Activated B cell treated with CpG ODN at 0.5 μM for 24 hours (primary cell): ENCODE measurements at regions of chr2 and their contacts with region 1.

Region 1: DNA sequence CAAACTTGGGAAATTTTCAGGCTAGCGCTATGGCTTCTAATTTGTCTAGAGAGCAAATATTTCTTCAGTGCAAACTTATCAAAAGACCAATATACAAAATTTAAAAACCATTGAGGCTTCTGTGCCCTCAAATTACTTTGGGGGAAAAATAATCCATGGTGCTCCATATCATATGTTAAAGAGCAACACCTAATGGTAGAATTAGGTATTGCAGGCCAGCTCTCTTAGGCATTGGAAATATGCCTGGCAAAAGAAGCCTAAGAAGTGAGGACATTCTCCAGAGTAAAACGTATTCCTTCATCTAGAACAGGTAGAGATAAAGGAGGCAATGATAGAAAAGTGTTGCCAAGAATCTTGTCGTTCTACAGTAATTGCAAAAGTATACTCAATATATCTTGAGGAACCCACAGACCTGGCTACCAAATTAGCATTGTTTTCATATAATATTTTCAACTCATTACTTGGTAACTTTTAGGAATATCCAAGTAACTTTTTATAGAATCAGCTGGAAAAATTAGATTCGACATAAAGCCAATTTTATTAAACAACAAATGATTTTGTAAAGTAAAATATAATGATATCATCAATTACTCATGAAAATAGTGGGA is 401.1 kb downstream of the BCL11A start:
- DNase-seq: no peak
- ATAC-seq: no peak
- H3K4me3 Mint-ChIP-seq: no peak overlapping the region
- H3K27ac Mint-ChIP-seq: no peak overlapping the region
- H3K4me1 Mint-ChIP-seq: peaks cover 23% of the 10 kb centered on the region
- H3K27me3 Mint-ChIP-seq: no peaks in the 10 kb centered on the region
- CTCF ChIP-seq: no peak

Region 2: DNA sequence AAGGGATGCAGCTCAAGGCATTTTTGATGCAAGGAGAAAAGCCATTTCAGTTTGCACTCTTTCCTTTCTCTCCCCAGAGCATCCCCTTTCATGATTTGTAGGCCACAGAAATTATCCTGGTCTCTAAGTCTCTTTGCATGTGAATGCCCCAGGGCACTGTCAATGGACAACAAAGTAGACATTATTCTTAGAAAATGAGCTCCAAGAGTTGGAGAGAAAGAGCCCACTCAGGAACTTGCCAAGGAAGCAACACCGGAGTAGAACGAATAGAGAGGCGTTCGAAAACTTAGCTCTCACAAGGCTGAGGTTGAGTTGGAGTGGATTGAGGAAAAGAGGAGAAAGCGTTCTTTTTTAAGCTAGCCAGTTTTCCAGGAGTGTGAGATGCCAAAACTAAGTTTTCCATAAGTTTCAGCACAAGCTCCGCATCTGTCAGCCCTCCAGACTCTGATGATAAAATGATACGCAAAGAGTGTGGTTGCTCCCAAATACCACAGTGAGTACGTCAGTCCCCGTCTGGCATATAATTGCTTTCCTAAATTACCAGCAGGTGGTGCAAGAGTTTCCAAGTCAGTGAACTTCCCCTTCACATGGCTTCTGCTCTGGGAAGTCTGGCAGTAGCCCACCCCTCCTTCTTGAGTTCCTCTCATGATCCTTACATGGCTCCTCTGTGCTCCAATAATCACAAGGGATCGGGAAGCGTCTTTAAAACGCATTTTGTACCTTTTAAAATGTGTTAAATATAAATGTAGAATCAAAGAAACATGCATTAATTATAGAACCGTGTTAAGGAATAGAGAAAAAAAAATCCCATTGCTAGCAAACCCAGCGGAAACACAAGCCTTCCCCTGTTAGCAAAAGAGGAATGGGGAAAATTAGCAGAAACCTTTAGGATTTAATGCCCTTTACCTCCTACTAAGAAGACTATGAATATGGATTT is 850.6 kb before region 1 on chr2:
- CTCF ChIA-PET with region 1: interaction called, 4 read pairs
- POLR2A ChIA-PET with region 1: no interaction called
- intact Hi-C with region 1: loop called (anchors 5 kb)
- DNase-seq: no peak
- ATAC-seq: peak; percentile 67
- H3K4me3 Mint-ChIP-seq: no peak overlapping the region
- H3K27ac Mint-ChIP-seq: no peak overlapping the region
- H3K4me1 Mint-ChIP-seq: no peaks in the 10 kb centered on the region
- H3K27me3 Mint-ChIP-seq: peaks cover 2% of the 10 kb centered on the region
- CTCF ChIP-seq: no peak

Region 3: DNA sequence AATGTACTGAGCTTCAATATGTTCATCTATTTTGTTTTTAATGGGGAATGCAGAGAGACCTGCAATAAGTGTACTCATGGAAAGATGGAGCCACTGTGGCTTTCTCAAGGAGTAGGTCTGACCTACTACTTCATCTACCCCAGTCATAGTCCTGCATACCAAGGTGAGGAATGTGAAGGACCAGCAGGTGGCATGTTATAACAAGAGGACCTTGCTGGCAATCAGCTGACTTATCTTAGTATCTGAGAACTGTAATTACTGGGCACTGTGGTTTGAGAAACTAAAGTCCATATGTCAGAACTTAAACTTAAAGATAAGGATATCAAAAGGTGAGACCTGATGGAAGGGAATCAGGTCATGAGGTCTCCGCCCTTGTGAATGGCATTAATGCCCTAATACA is 703.1 kb before region 1 on chr2:
- CTCF ChIA-PET with region 1: no interaction called
- POLR2A ChIA-PET with region 1: no interaction called
- intact Hi-C with region 1: loop called (anchors 1 kb)
- DNase-seq: no peak
- ATAC-seq: peak; percentile 77
- H3K4me3 Mint-ChIP-seq: no peak overlapping the region
- H3K27ac Mint-ChIP-seq: no peak overlapping the region
- H3K4me1 Mint-ChIP-seq: no peaks in the 10 kb centered on the region
- H3K27me3 Mint-ChIP-seq: no peaks in the 10 kb centered on the region
- CTCF ChIP-seq: no peak

Region 4: DNA sequence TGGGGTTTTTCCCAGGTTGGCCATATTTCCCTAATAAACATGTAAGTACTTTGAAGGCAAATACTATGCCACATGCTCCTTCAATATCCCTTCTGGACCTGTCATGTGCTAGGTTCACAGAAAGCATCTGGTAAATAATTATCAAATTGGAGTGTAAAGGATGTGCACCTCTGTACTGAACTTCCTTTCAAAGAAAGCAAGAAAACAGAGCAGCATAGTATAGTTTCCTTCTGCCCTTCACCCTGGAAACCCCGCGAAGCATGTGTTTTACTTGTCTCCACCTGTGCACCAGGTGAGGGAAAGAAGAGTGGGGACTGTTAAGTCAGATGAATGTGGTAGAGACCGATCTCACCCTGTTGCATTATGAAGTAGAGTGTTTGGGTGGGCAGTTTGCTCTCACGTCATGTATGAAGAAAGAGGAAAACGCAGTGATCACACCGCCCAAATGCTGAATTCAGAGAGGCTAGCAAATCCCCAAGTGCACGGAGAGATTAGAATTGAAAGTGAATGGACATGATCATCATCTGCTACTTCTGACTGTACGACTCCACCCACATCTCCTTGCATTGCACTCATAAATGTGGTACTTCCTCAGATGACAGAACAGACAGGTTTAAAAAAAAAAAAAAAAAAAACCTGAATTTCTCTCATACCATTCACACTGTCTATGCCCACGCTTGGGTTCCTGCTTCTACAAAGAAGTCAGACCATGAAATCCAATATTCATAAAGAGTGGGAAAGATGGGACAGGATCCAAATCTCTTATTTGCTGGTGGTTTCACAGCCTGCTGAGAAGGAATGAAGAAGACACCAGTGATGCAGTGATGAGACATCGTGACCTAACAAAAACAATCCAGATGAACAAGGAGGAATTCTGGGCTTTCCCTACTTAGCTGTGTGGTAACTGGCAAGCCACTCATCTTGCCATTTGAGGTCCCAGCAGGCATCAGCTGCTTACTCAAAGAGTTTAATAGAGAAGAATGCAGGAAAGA is 47.5 kb before region 1 on chr2:
- CTCF ChIA-PET with region 1: no interaction called
- POLR2A ChIA-PET with region 1: no interaction called
- intact Hi-C with region 1: loop called (anchors 2 kb)
- DNase-seq: no peak
- ATAC-seq: peak; percentile 91
- H3K4me3 Mint-ChIP-seq: peak overlapping the region; percentile 83
- H3K27ac Mint-ChIP-seq: peak overlapping the region; percentile 79
- H3K4me1 Mint-ChIP-seq: peaks cover 23% of the 10 kb centered on the region
- H3K27me3 Mint-ChIP-seq: no peaks in the 10 kb centered on the region
- CTCF ChIP-seq: no peak